Activated CD4-positive, alpha-beta memory T cell treated with anti-CD3 and anti-CD28 coated beads, Interleukin-2, amount 10 ng/mL, durations not matched to agents 7 days and 5 days (primary cell): ENCODE measurements at regions of chr15 and their contacts with region 1.

Region 1: DNA sequence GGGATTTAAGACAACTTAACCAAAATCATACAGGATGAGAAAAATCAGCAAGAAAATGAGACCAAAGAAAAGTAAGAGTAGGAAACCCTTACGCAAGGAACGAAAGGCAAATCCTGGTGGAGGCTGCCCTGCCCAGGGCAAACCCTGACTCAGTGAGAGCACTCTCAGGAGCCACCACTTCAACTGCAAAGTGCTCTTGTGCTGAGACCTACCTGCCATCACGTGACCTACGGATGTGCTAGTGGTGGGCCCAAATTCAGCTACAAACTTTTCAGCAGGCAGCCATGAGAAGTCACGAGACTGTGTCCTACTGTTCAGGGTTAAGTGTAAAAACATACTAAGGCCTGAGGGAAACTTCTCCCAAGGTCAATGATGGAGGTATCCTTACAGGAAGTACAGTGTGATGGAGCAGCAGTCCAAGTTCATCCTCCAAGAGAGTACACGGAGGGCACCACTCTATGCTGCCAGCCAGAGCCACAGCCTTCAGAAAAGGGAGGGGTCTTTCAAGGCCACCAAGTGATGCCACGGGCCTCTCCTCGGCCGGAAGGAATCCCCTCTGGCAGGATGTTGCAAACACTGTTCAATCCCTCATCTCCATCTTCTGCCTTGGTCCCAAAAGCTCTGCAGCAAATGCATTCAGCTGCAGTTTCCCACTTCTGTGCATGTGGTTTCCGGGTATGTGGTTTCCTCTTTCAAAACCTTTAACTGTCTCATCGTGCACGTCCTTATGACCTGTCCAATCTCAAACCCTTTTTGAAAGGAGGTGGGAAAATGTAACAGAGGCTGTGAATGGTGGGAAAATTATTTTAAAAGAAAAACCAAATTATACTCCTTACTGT is 9.5 kb downstream of the CHSY1 start:
- DNase-seq: peak; percentile 80
- H3K4me3 Mint-ChIP-seq: peak overlapping the region; percentile 60
- H3K27ac Mint-ChIP-seq: peak overlapping the region; percentile 84
- H3K4me1 Mint-ChIP-seq: peaks cover 95% of the 10 kb centered on the region
- H3K27me3 Mint-ChIP-seq: no peaks in the 10 kb centered on the region

Region 2: DNA sequence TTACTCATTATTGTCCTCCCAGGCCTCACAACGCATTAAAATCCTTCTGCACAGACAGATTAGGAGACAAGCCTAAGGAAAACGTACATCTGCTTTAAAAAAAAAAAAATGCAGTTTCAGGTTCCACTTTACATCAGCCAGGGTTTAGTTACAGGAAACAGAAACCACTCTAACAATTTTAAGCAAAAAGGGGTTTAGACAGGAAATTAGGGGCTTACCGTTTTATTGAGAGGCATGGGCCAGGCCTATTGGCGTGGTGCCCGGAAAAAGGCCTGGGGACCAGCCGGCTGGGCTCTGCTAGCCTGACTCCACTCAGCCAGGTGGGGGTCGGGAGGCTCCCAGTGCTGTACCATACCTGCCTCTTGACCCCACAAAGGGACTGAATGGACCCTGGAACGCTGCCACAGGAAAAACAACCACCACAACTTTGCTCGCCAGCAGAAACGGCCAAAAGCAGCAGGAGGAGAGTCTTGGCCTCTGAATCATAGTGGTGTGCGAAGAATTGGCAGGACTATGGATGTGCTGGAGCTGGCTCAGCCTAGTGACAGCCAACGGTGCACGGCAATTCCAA is 114.8 kb before region 1 on chr15:
- CTCF ChIA-PET with region 1: interaction called, 12 read pairs
- POLR2A ChIA-PET with region 1: interaction called, 11 read pairs
- DNase-seq: peak; percentile 53
- H3K4me3 Mint-ChIP-seq: peak overlapping the region; percentile 66
- H3K27ac Mint-ChIP-seq: peak overlapping the region; percentile 95
- H3K4me1 Mint-ChIP-seq: peaks cover 65% of the 10 kb centered on the region
- H3K27me3 Mint-ChIP-seq: peaks cover 8% of the 10 kb centered on the region

Region 3: GRCh38 chr15:101201406-101202174 is 40.8 kb before region 1 on chr15:
- CTCF ChIA-PET with region 1: interaction called, 10 read pairs
- POLR2A ChIA-PET with region 1: interaction called, 103 read pairs
- DNase-seq: peak; percentile 36
- H3K4me3 Mint-ChIP-seq: no peak overlapping the region
- H3K27ac Mint-ChIP-seq: peak overlapping the region; percentile 99
- H3K4me1 Mint-ChIP-seq: peaks cover 89% of the 10 kb centered on the region
- H3K27me3 Mint-ChIP-seq: no peaks in the 10 kb centered on the region

Region 4: GRCh38 chr15:101215681-101216080 is 26.7 kb before region 1 on chr15:
- CTCF ChIA-PET with region 1: no interaction called
- POLR2A ChIA-PET with region 1: interaction called, 11 read pairs
- DNase-seq: no peak
- H3K4me3 Mint-ChIP-seq: no peak overlapping the region
- H3K27ac Mint-ChIP-seq: no peak overlapping the region
- H3K4me1 Mint-ChIP-seq: peaks cover 64% of the 10 kb centered on the region
- H3K27me3 Mint-ChIP-seq: no peaks in the 10 kb centered on the region